ENCODE measurements at regions of chr9 and their contacts with region 1.

Region 1: GRCh38 chr9:72473474-72474261 is 47.7 kb upstream of the TMC1 start:
- DNase-seq: no peak
- H3K4me3 Mint-ChIP-seq: no peak overlapping the region
- H3K27ac Mint-ChIP-seq: peak overlapping the region; percentile 84
- H3K4me1 Mint-ChIP-seq: peaks cover 42% of the 10 kb centered on the region
- H3K27me3 Mint-ChIP-seq: no peaks in the 10 kb centered on the region

Region 2: DNA sequence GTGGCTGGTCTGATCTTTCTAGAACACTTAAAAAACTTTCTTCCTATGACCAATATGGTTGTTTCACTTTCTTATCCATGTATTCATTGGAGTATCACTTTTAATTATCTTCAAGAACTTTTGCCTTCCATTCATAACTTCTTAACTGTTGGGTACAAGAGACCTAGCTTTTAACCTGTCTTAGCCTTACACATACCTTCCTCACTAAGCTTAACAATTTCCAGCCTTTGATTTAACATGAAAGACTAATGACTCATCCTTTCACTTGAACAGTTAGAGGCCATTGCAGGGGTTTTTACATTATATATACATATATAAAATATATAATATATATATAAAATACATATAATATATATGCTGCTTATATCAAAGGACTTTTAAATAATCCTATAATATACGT is 620.6 kb before region 1 on chr9:
- CTCF ChIA-PET with region 1: no interaction called
- intact Hi-C with region 1: loop called (anchors 1 kb)
- DNase-seq: no peak
- H3K4me3 Mint-ChIP-seq: no peak overlapping the region
- H3K27ac Mint-ChIP-seq: no peak overlapping the region
- H3K4me1 Mint-ChIP-seq: peaks cover 10% of the 10 kb centered on the region
- H3K27me3 Mint-ChIP-seq: no peaks in the 10 kb centered on the region

Region 3: GRCh38 chr9:72383978-72384709 is 89.5 kb before region 1 on chr9:
- CTCF ChIA-PET with region 1: no interaction called
- intact Hi-C with region 1: loop called (anchors 2 kb)
- DNase-seq: no peak
- H3K4me3 Mint-ChIP-seq: no peak overlapping the region
- H3K27ac Mint-ChIP-seq: no peak overlapping the region
- H3K4me1 Mint-ChIP-seq: peaks cover 6% of the 10 kb centered on the region
- H3K27me3 Mint-ChIP-seq: no peaks in the 10 kb centered on the region

Region 4: DNA sequence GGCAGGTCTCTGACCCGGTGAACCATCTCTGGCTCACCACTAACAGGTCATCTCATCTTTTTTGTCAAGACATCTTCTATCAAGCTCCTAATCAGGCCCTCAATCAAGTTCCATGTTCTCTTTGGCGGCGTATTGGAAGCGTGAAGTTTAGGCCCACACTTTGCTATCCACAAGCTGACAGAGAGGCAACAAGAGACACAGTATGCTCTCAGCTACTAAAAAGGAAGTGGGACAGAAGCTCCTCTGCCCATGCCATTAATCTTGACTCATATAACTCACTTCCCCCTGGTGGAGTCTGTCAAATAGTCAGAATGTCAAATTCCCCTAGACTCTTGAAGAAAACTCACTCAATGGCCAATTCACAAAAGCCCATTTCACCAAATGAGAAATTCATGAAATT is 29.8 kb before region 1 on chr9:
- CTCF ChIA-PET with region 1: interaction called, 3 read pairs
- intact Hi-C with region 1: loop called (anchors 1 kb)
- DNase-seq: peak; percentile 12
- H3K4me3 Mint-ChIP-seq: no peak overlapping the region
- H3K27ac Mint-ChIP-seq: no peak overlapping the region
- H3K4me1 Mint-ChIP-seq: peaks cover 14% of the 10 kb centered on the region
- H3K27me3 Mint-ChIP-seq: no peaks in the 10 kb centered on the region

Region 5: GRCh38 chr9:72459308-72459707 is 14.4 kb before region 1 on chr9:
- CTCF ChIA-PET with region 1: no interaction called
- intact Hi-C with region 1: loop called (anchors 2 kb)
- DNase-seq: no peak
- H3K4me3 Mint-ChIP-seq: no peak overlapping the region
- H3K27ac Mint-ChIP-seq: no peak overlapping the region
- H3K4me1 Mint-ChIP-seq: peaks cover 7% of the 10 kb centered on the region
- H3K27me3 Mint-ChIP-seq: no peaks in the 10 kb centered on the region

Region 6: DNA sequence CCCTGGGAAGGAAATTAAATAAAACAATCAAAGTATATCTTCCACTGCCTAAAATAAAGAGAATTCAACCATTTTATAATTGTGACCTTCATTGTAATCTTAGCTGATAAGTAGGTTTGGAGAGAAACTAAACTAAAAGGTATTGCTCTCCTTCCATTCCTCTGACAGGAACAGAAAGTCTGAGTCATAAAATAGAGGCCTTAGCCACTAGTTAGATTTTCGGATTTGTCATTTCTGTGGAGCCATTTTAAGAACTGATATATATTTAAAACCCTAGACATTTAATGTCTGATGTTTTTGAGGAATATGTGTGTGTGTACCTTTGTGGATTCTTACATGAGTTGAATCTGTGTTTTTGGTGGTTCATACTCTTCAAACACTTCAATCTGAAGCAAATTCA is 36.0 kb after region 1 on chr9:
- CTCF ChIA-PET with region 1: no interaction called
- intact Hi-C with region 1: loop called (anchors 1 kb)
- DNase-seq: no peak
- H3K4me3 Mint-ChIP-seq: no peak overlapping the region
- H3K27ac Mint-ChIP-seq: peak overlapping the region; percentile 79
- H3K4me1 Mint-ChIP-seq: peaks cover 16% of the 10 kb centered on the region
- H3K27me3 Mint-ChIP-seq: no peaks in the 10 kb centered on the region

Region 7: DNA sequence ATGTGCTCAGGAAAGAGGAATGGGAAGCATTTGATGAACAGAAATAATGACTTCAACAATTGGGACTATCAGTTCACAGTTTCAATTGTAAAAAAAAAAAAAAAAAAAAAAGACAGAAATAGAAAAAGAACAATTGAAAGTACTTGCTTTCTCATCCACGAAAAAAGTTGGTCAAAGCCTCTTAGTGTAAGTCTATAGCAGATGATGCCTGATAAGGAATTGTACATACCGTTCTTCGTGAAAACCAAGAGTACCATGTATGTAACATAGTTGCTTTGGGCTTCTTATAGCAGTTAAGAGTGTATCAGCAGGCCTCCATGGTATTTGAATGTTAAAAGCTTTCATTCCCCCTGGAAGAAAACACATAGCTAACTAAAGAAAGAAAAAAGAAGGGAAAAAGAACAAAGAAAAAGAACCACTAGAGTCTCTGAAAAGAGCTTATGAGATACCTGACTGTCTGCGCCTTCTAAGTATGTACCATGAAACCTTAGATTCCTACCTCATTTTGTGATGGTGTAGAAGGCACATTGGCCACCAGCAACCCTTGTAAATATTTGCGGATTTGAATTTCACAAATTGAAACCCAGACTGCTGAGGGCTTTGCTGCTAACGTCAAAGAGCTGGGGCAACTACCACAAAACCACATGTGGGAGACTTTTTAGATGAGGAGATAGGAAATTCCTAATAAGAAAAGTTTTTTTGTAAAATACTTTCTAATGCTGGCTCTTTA is 122.9 kb after region 1 on chr9:
- CTCF ChIA-PET with region 1: no interaction called
- intact Hi-C with region 1: no loop called
- DNase-seq: no peak
- H3K4me3 Mint-ChIP-seq: no peak overlapping the region
- H3K27ac Mint-ChIP-seq: no peak overlapping the region
- H3K4me1 Mint-ChIP-seq: no peaks in the 10 kb centered on the region
- H3K27me3 Mint-ChIP-seq: no peaks in the 10 kb centered on the region

Region 8: GRCh38 chr9:72882117-72882775 is 408.6 kb after region 1 on chr9:
- CTCF ChIA-PET with region 1: no interaction called
- intact Hi-C with region 1: no loop called
- DNase-seq: no peak
- H3K4me3 Mint-ChIP-seq: no peak overlapping the region
- H3K27ac Mint-ChIP-seq: no peak overlapping the region
- H3K4me1 Mint-ChIP-seq: no peaks in the 10 kb centered on the region
- H3K27me3 Mint-ChIP-seq: no peaks in the 10 kb centered on the region